ENCODE measurements at regions of chr1 and their contacts with region 1.

Region 1: DNA sequence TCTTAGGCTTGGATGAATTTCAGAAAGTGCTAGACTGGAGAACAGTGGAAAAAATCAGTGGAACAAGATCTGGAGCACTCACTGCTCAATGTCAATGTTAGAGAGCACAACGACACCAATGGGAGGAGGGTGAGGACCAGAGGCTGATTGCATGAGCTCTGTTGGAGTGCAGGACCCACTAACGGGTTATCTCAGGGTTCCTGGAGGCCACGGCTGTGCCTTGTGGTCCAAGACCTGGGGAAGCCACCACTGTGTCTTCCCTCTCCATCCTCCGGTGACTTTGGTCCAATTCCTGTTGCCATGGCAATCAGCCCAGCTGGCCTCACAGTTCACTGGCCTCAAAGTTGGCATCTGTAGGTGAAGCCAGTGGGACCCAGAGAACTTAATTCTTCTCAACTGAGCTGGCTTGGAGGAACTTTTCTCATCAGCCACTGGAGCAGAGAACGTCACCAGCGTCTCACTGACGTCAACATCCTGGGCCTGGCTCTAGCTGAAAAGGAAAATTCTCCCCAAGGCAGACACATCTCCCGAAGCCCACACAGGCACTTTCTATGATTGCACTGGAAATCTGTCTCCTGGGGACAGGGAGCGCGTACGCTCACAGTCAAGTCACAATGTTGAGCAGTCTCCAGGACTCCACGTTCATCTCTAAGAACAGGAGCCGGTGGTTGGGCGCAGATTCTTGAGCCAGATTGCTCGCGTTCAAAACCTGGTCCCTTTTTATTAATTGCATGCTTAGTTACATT is 21.9 kb upstream of the GPR157 start:
- DNase-seq: no peak
- H3K4me3 ChIP-seq: no peak overlapping the region
- H3K27ac ChIP-seq: peak overlapping the region; percentile 40 to 85
- H3K4me1 ChIP-seq: no peaks in the 10 kb centered on the region
- H3K27me3 ChIP-seq: no peaks in the 10 kb centered on the region
- CTCF ChIP-seq: no peak
- POLR2A ChIP-seq: no peak

Region 2: GRCh38 chr1:7388479-7389185 is 1762.1 kb before region 1 on chr1:
- intact Hi-C with region 1: no loop called
- DNase-seq: peak in 1 of 2 donors; percentile 17
- H3K4me3 ChIP-seq: peak overlapping the region in 1 of 3 donors; percentile 3
- H3K27ac ChIP-seq: peak overlapping the region in 1 of 2 donors; percentile 76
- H3K4me1 ChIP-seq: peaks cover 8 to 14% of the 10 kb centered on the region in 2 donors
- H3K27me3 ChIP-seq: no peaks in the 10 kb centered on the region
- CTCF ChIP-seq: no peak
- POLR2A ChIP-seq: no peak

Region 3: GRCh38 chr1:7669559-7670311 is 1481.0 kb before region 1 on chr1:
- intact Hi-C with region 1: loop called (anchors 5 kb)
- DNase-seq: peak in 1 of 2 donors; percentile 45
- H3K4me3 ChIP-seq: peak overlapping the region; percentile 11 to 63 (median 51)
- H3K27ac ChIP-seq: no peak overlapping the region
- H3K4me1 ChIP-seq: no peaks in the 10 kb centered on the region
- H3K27me3 ChIP-seq: no peaks in the 10 kb centered on the region
- CTCF ChIP-seq: peak; percentile 42 to 76 (median 68)
- POLR2A ChIP-seq: no peak

Region 4: DNA sequence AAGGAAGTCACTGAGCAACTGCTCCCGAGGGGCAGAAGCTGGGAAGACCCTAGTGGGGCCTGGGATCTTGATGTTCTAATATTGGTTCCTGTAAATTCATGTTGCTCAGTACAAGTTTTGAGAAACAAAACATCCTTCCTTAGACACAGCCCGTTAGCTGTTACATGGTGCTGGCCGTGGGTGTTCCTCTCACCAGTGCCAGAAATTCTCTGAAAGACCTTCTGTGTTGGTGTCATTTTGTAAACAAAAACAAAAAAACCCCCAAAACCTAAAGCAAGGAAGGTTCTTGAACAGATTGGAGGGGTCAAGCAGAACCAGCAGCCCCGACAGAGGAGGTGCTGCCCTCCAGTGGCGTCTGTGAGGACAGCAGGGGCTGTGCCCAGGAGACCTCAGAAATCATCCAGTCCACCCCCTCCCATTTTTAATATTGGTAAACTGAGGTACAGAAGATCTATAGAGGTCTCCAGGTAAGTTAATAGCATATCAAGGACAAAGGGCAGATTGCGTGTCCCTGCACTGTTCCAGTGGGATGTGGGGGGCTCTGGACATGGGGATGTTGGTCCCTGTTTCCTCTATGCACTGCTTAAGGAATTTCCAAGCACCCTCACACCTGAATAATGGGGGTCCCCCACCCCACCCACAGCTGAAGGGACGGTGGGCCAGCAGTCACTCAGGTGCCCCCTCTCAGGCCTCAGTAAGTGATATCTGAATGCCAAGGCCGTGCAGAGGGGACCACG is 162.7 kb before region 1 on chr1:
- intact Hi-C with region 1: no loop called
- DNase-seq: peak in 1 of 2 donors; percentile 44
- H3K4me3 ChIP-seq: no peak overlapping the region
- H3K27ac ChIP-seq: peak overlapping the region; percentile 22 to 45
- H3K4me1 ChIP-seq: no peaks in the 10 kb centered on the region
- H3K27me3 ChIP-seq: no peaks in the 10 kb centered on the region
- CTCF ChIP-seq: peak; percentile 70 to 91 (median 74)
- POLR2A ChIP-seq: no peak

Region 5: GRCh38 chr1:9211291-9211811 is 60.6 kb after region 1 on chr1:
- intact Hi-C with region 1: no loop called
- DNase-seq: no peak
- H3K4me3 ChIP-seq: no peak overlapping the region
- H3K27ac ChIP-seq: no peak overlapping the region
- H3K4me1 ChIP-seq: no peaks in the 10 kb centered on the region
- H3K27me3 ChIP-seq: no peaks in the 10 kb centered on the region
- CTCF ChIP-seq: no peak
- POLR2A ChIP-seq: no peak

Region 6: GRCh38 chr1:9438431-9439073 is 287.8 kb after region 1 on chr1:
- intact Hi-C with region 1: no loop called
- DNase-seq: peak; percentile 66 to 87
- H3K4me3 ChIP-seq: no peak overlapping the region
- H3K27ac ChIP-seq: peak overlapping the region; percentile 87 to 90
- H3K4me1 ChIP-seq: peaks cover 0 to 7% of the 10 kb centered on the region in 2 donors
- H3K27me3 ChIP-seq: no peaks in the 10 kb centered on the region
- CTCF ChIP-seq: no peak
- POLR2A ChIP-seq: no peak

Measured in breast epithelium (tissue), 4 donors.